Esophagus muscularis mucosa (tissue), 4 donors: ENCODE measurements at regions of chr5 and their contacts with region 1.

Region 1: GRCh38 chr5:131589510-131590348 is 45.3 kb downstream of the RAPGEF6 start:
- DNase-seq: no peak
- H3K4me3 ChIP-seq: no peak overlapping the region
- H3K27ac ChIP-seq: no peak overlapping the region
- H3K4me1 ChIP-seq: peaks cover 11 to 25% (median 20%) of the 10 kb centered on the region in 4 donors
- H3K27me3 ChIP-seq: no peaks in the 10 kb centered on the region
- CTCF ChIP-seq: peak; percentile 70 to 92 (median 80)
- EP300 ChIP-seq: no peak
- POLR2A ChIP-seq: no peak

Region 2: GRCh38 chr5:131548176-131548575 is 41.6 kb before region 1 on chr5:
- intact Hi-C with region 1: no loop called
- DNase-seq: no peak
- H3K4me3 ChIP-seq: no peak overlapping the region
- H3K27ac ChIP-seq: no peak overlapping the region
- H3K4me1 ChIP-seq: no peaks in the 10 kb centered on the region
- H3K27me3 ChIP-seq: no peaks in the 10 kb centered on the region
- CTCF ChIP-seq: no peak
- EP300 ChIP-seq: no peak
- POLR2A ChIP-seq: no peak

Region 3: DNA sequence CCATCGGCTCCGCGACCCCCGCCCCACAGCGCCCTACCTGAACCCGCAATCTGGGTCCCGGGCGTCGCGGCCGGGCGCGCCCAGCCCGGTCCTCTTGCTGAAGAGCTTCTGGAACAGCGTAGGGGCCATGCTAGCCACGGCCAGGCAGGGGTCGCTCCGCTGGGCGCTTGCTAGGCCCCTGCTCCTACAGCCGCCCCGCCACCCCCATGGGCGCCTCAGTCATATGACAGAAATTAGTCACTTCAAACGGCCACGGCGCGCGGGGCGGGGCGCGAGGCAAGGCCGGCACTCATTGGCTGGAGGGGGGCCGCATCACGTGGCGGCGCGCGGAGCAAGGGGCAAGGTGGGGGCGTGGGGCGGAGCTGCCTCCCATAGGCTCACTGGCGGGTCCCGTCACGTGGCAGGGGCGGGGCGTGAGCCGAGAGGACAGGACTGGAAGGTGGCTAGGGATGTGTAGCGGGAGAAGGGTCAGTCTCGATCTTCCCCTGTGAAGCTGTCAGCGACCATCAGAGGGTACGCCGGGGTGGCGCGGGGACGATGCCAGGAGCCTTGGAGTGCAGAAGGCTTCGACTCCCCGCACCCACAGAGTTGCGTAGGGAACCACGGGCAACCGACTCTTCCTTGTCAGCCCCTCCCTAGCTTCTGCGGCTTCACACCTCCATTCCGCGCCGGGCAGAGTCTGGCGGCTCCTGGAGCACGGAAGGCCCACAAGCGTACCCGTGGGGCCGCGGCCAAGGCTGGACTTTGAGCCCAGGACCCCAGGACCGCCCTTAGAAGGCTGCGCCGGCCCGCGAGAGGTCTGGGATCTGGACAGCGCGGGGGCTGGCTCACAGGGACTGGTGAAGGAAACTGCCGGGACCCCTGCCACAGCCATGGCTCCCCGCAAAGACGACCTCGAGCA is 207.3 kb after region 1 on chr5 and contains the start of gene FNIP1:
- intact Hi-C with region 1: loop called (anchors 10 kb)
- DNase-seq: peak; percentile 100
- H3K4me3 ChIP-seq: peak within 1 kb of the TSS; percentile 80 to 99 (median 90)
- H3K27ac ChIP-seq: peak within 1 kb of the TSS; percentile 99 to 100 (median 99)
- H3K4me1 ChIP-seq: peaks cover 5 to 46% (median 40%) of the 10 kb centered on the region in 4 donors
- H3K27me3 ChIP-seq: no peaks in the 10 kb centered on the region
- CTCF ChIP-seq: no peak
- EP300 ChIP-seq: no peak
- POLR2A ChIP-seq: peak; percentile 94
- total RNA-seq, gene FNIP1: 36.6 to 52.7 (median 50.1) TPM

Region 4: GRCh38 chr5:131810510-131811249 is 221.0 kb after region 1 on chr5:
- intact Hi-C with region 1: loop called (anchors 5 kb)
- DNase-seq: no peak
- H3K4me3 ChIP-seq: no peak overlapping the region
- H3K27ac ChIP-seq: peak overlapping the region; percentile 19 to 48 (median 34)
- H3K4me1 ChIP-seq: peaks cover 7 to 16% (median 14%) of the 10 kb centered on the region in 4 donors
- H3K27me3 ChIP-seq: no peaks in the 10 kb centered on the region
- CTCF ChIP-seq: peak; percentile 31 to 40 (median 38)
- EP300 ChIP-seq: no peak
- POLR2A ChIP-seq: no peak

Region 5: GRCh38 chr5:132007399-132008165 is 417.9 kb after region 1 on chr5:
- intact Hi-C with region 1: loop called (anchors 1 kb)
- DNase-seq: no peak
- H3K4me3 ChIP-seq: no peak overlapping the region
- H3K27ac ChIP-seq: no peak overlapping the region
- H3K4me1 ChIP-seq: peaks cover 16 to 40% (median 31%) of the 10 kb centered on the region in 4 donors
- H3K27me3 ChIP-seq: peaks cover 0 to 18% (median 0%) of the 10 kb centered on the region in 4 donors
- CTCF ChIP-seq: peak; percentile 71 to 78 (median 75)
- EP300 ChIP-seq: no peak
- POLR2A ChIP-seq: no peak

Region 6: GRCh38 chr5:132063090-132063911 is 473.6 kb after region 1 on chr5:
- intact Hi-C with region 1: loop called (anchors 2 kb)
- DNase-seq: no peak
- H3K4me3 ChIP-seq: no peak overlapping the region
- H3K27ac ChIP-seq: no peak overlapping the region
- H3K4me1 ChIP-seq: no peaks in the 10 kb centered on the region
- H3K27me3 ChIP-seq: no peaks in the 10 kb centered on the region
- CTCF ChIP-seq: peak; percentile 82 to 97 (median 87)
- EP300 ChIP-seq: no peak
- POLR2A ChIP-seq: no peak